Prostate gland (tissue), 2 donors: ENCODE measurements at regions of chr4 and their contacts with region 1.

Region 1: DNA sequence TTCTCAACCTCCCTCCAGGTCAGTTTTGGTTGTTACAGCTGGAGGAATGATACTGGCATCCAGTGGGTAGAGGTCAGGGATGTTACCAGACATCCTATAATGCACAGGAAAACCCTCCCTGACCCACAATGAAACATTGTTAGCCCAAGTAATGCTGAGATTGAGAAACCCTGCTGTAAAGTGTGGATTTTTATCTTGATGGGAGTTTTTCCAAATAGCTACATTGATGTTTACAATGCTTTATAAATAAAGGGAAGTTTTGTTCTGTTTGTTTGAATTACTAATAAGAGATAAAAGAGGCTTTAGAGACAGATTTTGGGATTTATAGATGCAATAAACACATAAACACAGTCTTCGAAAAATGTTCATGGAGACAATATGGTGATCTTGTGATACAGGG is 194.0 kb upstream of the NUDT6 start:
- DNase-seq: no peak
- H3K4me3 ChIP-seq: no peak overlapping the region
- H3K27ac ChIP-seq: no peak overlapping the region
- H3K4me1 ChIP-seq: peaks cover 8% of the 10 kb centered on the region
- H3K27me3 ChIP-seq: no peaks in the 10 kb centered on the region
- CTCF ChIP-seq: no peak
- POLR2A ChIP-seq: no peak

Region 2: DNA sequence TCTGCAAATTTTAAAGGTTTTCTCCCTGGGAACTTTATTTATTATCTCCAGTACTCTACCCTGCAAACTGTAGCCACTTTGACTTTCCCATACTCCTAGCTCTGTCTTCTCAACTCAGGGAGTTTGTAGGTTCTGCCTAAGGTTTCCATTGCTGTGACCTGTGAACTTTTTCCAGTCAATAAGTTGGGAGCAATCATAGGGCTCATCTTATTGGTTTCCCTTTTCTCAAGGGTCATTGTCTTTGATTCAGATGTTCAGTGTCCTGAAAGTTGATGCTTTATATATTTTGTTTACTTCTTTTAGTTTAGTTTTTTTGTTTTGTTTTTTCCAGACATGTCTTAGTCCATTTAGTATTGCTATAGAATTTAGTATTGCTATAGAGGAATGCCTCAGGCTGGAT is 108.7 kb before region 1 on chr4:
- intact Hi-C with region 1: no loop called
- DNase-seq: no peak
- H3K4me3 ChIP-seq: no peak overlapping the region
- H3K27ac ChIP-seq: no peak overlapping the region
- H3K4me1 ChIP-seq: no peaks in the 10 kb centered on the region
- H3K27me3 ChIP-seq: no peaks in the 10 kb centered on the region
- CTCF ChIP-seq: no peak
- POLR2A ChIP-seq: no peak

Region 3: GRCh38 chr4:123037804-123038203 is 78.6 kb before region 1 on chr4:
- intact Hi-C with region 1: no loop called
- DNase-seq: no peak
- H3K4me3 ChIP-seq: no peak overlapping the region
- H3K27ac ChIP-seq: no peak overlapping the region
- H3K4me1 ChIP-seq: no peaks in the 10 kb centered on the region
- H3K27me3 ChIP-seq: no peaks in the 10 kb centered on the region
- CTCF ChIP-seq: no peak
- POLR2A ChIP-seq: no peak

Region 4: GRCh38 chr4:123304151-123304964 is 187.9 kb after region 1 on chr4:
- intact Hi-C with region 1: loop called (anchors 10 kb)
- DNase-seq: no peak
- H3K4me3 ChIP-seq: no peak overlapping the region
- H3K27ac ChIP-seq: no peak overlapping the region
- H3K4me1 ChIP-seq: no peaks in the 10 kb centered on the region
- H3K27me3 ChIP-seq: no peaks in the 10 kb centered on the region
- CTCF ChIP-seq: no peak
- POLR2A ChIP-seq: no peak